HAP-1 (cell line): ENCODE measurements at regions of chr1 and their contacts with region 1.

Region 1: DNA sequence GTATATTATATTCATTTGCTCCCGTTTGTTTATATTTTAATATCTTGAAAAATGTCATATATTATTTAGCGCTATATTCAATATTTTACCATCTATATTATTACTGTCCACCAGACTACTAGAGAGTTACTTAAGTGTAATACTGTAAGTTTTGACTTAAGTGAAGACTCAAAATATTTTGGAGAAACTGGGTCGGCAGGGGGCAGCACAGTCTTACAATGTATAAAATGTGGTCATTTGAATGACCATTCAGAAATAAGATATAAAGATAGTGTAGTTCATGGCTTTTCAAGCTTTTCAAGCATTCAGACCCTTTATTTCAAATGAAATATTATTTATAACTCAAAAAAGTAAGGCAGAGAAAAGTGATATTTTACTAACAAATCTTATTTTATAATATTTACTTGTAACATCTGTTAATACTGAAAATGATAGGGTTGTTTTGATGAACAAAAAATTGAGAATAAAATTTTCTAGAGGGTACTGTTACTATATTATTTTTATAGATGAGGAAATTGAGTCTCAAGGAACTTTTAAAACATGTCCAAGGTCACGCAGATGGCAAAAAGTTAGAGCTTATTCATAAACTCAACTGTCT is 89.0 kb upstream of the SERTAD4 start:
- DNase-seq: peak; percentile 44 to 86
- H3K4me3 ChIP-seq: no peak overlapping the region
- H3K4me1 ChIP-seq: no peaks in the 10 kb centered on the region
- H3K27me3 ChIP-seq: peaks cover 11% of the 10 kb centered on the region

Region 2: DNA sequence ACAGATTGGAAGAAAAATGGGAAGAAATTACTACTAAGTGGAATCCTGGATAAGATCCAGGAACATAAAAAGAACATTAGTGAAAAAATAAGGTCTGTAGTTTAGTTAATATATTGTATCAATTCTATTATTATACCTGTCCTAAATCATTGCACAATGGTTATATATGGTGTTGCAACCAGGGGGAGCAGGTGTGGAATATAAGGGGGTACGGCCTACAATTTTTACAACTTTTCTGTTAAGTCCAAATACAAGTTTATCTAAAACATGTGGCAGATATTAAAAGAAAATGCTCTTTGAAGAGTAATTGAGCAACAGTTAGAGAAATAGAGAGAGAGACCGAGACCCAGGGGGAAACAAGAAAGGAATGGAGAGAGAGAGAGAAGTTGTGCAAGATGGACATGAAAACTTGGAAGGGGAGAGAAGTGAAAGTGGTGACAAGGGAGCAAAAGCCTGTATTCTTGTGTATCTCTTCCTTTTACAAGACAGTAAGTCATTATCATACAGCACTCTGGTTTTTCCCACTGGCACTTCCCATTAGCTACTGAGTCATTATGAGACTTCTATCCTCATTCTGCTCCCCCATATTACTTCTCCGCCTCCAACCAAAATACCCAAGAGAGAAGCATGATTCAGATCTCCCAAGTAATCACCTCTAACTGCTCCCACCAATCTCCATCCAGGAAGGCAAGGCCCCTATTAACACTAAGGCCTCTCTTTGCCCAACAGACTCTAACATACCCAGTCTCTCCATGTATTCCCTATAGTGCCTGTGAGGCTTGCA is 410.0 kb before region 1 on chr1:
- in situ Hi-C with region 1: no loop called
- DNase-seq: no peak
- H3K4me3 ChIP-seq: no peak overlapping the region
- H3K4me1 ChIP-seq: no peaks in the 10 kb centered on the region
- H3K27me3 ChIP-seq: no peaks in the 10 kb centered on the region

Region 3: GRCh38 chr1:209860293-209860881 is 283.2 kb before region 1 on chr1:
- in situ Hi-C with region 1: loop called (anchors 25 kb)
- DNase-seq: peak; percentile 68 to 87
- H3K4me3 ChIP-seq: no peak overlapping the region
- H3K4me1 ChIP-seq: peaks cover 6% of the 10 kb centered on the region; the same call in 1 of the 2 replicates
- H3K27me3 ChIP-seq: no peaks in the 10 kb centered on the region

Region 4: DNA sequence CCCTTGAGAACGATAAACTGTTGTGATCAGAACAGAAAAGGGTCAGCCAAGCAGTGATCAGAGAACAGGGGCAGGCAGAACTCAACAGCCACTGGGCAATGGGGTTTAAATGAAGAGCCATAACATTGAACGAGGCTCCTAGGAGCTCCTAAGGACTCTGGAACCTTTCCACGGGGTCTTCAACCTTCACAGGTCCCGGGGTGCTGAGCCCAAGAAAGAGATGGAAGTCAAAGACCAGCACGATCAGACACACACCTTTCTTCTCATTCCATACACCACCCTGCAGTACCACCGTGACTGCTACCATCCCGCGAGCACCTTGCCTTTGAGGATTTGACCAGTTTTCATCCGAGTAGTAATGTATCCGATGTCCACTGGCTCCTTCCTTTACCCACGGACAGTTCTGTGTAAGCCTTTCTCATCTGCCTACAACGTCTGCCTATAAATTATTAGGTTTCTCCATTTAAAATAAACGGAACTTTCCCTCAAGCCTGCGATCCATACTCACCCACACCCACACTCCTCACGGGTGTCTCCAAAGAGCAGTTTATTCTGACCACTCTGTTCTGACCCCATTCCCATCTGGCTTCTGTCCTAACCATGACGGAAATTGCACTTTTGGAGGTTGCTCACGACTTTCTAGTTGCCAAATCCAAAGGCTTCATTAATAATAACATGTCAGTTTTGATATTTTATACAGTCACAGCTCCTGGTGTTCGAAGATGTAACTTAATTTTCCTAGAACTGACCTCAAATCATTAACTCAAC is 168.3 kb after region 1 on chr1:
- in situ Hi-C with region 1: loop called (anchors 10 kb)
- DNase-seq: no peak
- H3K4me3 ChIP-seq: peak overlapping the region; percentile 30; the same call in 1 of the 2 replicates
- H3K4me1 ChIP-seq: no peaks in the 10 kb centered on the region
- H3K27me3 ChIP-seq: peaks cover 7% of the 10 kb centered on the region; the same call in 1 of the 2 replicates

Region 5: DNA sequence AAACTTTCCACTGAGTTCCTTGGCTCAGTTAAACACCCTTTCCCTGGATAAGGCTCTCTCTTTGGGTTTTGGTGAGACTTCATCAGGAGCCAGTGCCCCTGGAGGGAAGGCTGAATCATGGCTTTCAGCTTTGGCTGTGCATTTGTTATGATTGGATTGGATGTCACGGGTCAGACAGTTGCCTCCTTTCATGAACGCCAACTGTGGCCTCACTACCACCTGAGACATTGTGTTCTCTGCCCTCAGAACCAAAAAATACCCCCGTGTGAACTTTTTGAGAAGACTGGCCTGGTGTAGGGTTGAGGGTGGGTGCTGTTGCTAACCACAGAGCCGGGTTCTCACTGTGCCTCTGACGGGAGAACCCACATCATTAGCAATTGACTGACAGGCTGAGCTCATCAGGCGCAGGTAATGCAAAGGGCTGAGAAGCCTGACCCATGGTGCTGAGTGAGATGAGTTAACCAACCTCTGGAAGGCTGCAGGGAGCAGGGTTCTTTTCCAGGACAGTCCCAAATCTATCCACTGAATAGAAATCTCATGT is 250.8 kb after region 1 on chr1:
- in situ Hi-C with region 1: loop called (anchors 25 kb)
- DNase-seq: no peak
- H3K4me3 ChIP-seq: no peak overlapping the region
- H3K4me1 ChIP-seq: no peaks in the 10 kb centered on the region
- H3K27me3 ChIP-seq: peaks cover 18% of the 10 kb centered on the region